CD8-positive, alpha-beta T cell (primary cell): ENCODE measurements at regions of chr9 and their contacts with region 1.

Region 1: GRCh38 chr9:128117613-128118471 is 9.7 kb downstream of the PTGES2 start:
- DNase-seq: peak; percentile 93 to 100 (median 96)
- ATAC-seq: peak; percentile 96
- H3K4me3 ChIP-seq: no peak overlapping the region
- H3K4me3 Mint-ChIP-seq: no peak overlapping the region
- H3K27ac ChIP-seq: no peak overlapping the region
- H3K27ac Mint-ChIP-seq: no peak overlapping the region
- H3K4me1 ChIP-seq: peaks cover 6% of the 10 kb centered on the region
- H3K4me1 Mint-ChIP-seq: peaks cover 5% of the 10 kb centered on the region
- H3K27me3 ChIP-seq: no peaks in the 10 kb centered on the region
- H3K27me3 Mint-ChIP-seq: no peaks in the 10 kb centered on the region
- CTCF ChIP-seq: peak; percentile 100

Region 2: GRCh38 chr9:127955294-127956035 is 162.4 kb before region 1 on chr9:
- CTCF ChIA-PET with region 1: interaction called, 7 read pairs
- POLR2A ChIA-PET with region 1: no interaction called
- intact Hi-C with region 1: loop called in 1 of 2 experiments (anchors 1 kb)
- DNase-seq: peak; percentile 41 to 89 (median 82)
- ATAC-seq: peak; percentile 87
- H3K4me3 ChIP-seq: peak overlapping the region; percentile 4 to 21
- H3K4me3 Mint-ChIP-seq: peak overlapping the region; percentile 68
- H3K27ac ChIP-seq: peak overlapping the region; percentile 3 to 17
- H3K27ac Mint-ChIP-seq: peak overlapping the region; percentile 91
- H3K4me1 ChIP-seq: peaks cover 97% of the 10 kb centered on the region
- H3K4me1 Mint-ChIP-seq: peaks cover 85% of the 10 kb centered on the region
- H3K27me3 ChIP-seq: no peaks in the 10 kb centered on the region
- H3K27me3 Mint-ChIP-seq: no peaks in the 10 kb centered on the region
- CTCF ChIP-seq: peak; percentile 77

Region 3: GRCh38 chr9:128081056-128081455 is 36.8 kb before region 1 on chr9:
- CTCF ChIA-PET with region 1: interaction called, 17 read pairs
- POLR2A ChIA-PET with region 1: no interaction called
- intact Hi-C with region 1: no loop called
- DNase-seq: no peak
- ATAC-seq: no peak
- H3K4me3 ChIP-seq: no peak overlapping the region
- H3K4me3 Mint-ChIP-seq: no peak overlapping the region
- H3K27ac ChIP-seq: peak overlapping the region in 1 of 2 experiments; percentile 19
- H3K27ac Mint-ChIP-seq: peak overlapping the region; percentile 46
- H3K4me1 ChIP-seq: peaks cover 19% of the 10 kb centered on the region
- H3K4me1 Mint-ChIP-seq: peaks cover 49% of the 10 kb centered on the region
- H3K27me3 ChIP-seq: no peaks in the 10 kb centered on the region
- H3K27me3 Mint-ChIP-seq: no peaks in the 10 kb centered on the region
- CTCF ChIP-seq: no peak

Region 4: GRCh38 chr9:128094166-128094967 is 23.5 kb before region 1 on chr9:
- CTCF ChIA-PET with region 1: interaction called, 64 read pairs
- POLR2A ChIA-PET with region 1: interaction called, 5 read pairs
- intact Hi-C with region 1: no loop called
- DNase-seq: peak in 7 of 9 experiments; percentile 38 to 82 (median 62)
- ATAC-seq: peak; percentile 60
- H3K4me3 ChIP-seq: no peak overlapping the region
- H3K4me3 Mint-ChIP-seq: peak overlapping the region; percentile 66
- H3K27ac ChIP-seq: peak overlapping the region; percentile 57 to 74
- H3K27ac Mint-ChIP-seq: peak overlapping the region; percentile 93
- H3K4me1 ChIP-seq: peaks cover 75% of the 10 kb centered on the region
- H3K4me1 Mint-ChIP-seq: peaks cover 80% of the 10 kb centered on the region
- H3K27me3 ChIP-seq: no peaks in the 10 kb centered on the region
- H3K27me3 Mint-ChIP-seq: no peaks in the 10 kb centered on the region
- CTCF ChIP-seq: no peak

Region 5: DNA sequence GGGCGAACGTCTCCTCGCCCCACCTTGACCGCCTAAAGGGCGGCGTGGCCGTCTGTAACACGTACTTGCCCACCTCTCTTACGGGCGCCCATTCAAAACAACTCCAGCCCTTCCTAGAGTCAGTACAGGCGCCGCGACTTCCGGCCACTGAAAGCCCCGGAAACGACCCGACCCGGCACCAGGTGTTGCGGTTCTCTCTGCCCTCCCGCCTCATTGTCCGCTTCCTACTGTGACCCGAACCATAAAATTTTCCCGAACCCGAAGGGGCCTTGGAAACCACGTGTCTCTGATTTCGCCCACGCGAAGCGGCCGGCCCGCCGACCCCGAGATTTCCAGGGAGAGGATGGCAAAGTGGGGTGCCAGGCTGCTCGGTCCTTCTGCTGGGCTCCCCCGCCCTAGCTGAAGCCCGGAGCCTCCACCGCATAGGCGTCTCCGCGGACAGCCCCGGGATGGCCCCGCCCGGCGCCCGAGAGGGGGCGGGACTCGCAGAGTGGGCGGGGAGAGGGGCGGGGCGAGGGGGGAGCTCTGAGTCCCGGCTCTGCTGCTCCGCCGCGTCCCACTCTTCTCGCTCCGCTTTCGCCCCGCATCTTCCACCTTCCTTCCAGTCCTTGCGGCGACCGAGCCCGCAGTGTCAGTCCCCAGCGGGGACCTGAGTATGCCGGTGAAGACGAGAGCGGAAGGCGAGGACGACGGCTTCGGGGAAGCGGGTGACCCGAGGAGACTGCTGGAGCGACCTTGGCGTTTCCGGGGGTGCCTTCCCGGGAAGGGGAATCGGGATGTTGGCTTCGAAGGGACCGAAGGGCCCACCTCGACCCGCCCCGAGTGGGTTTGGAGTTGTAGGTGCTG is 10.4 kb after region 1 on chr9:
- CTCF ChIA-PET with region 1: interaction called, 13 read pairs
- POLR2A ChIA-PET with region 1: interaction called, 3 read pairs
- intact Hi-C with region 1: loop called in 1 of 2 experiments (anchors 1 kb)
- DNase-seq: peak; percentile 69 to 95 (median 83)
- ATAC-seq: peak; percentile 81
- H3K4me3 ChIP-seq: peak overlapping the region; percentile 99 to 100
- H3K4me3 Mint-ChIP-seq: peak overlapping the region; percentile 99
- H3K27ac ChIP-seq: peak overlapping the region; percentile 99
- H3K27ac Mint-ChIP-seq: peak overlapping the region; percentile 99
- H3K4me1 ChIP-seq: peaks cover 31% of the 10 kb centered on the region
- H3K4me1 Mint-ChIP-seq: peaks cover 38% of the 10 kb centered on the region
- H3K27me3 ChIP-seq: no peaks in the 10 kb centered on the region
- H3K27me3 Mint-ChIP-seq: peaks cover 2% of the 10 kb centered on the region
- CTCF ChIP-seq: no peak